ENCODE measurements at regions of chr19 and their contacts with region 1.

Region 1: GRCh38 chr19:33612928-33613619 is 8.7 kb upstream of the CHST8 start:
- DNase-seq: no peak
- ATAC-seq: no peak
- H3K4me3 ChIP-seq: no peak overlapping the region
- H3K27ac ChIP-seq: no peak overlapping the region
- H3K4me1 ChIP-seq: no peaks in the 10 kb centered on the region
- H3K27me3 ChIP-seq: peaks cover 34% of the 10 kb centered on the region
- CTCF ChIP-seq: no peak

Region 2: GRCh38 chr19:33514885-33515551 is 98.1 kb before region 1 on chr19:
- CTCF ChIA-PET with region 1: no interaction called
- POLR2A ChIA-PET with region 1: interaction called, 11 read pairs
- in situ Hi-C with region 1: no loop called
- intact Hi-C with region 1: no loop called
- DNase-seq: no peak
- ATAC-seq: 0 out of 2 replicates have a peak, but pooled peaks have one; percentile 26
- H3K4me3 ChIP-seq: no peak overlapping the region
- H3K27ac ChIP-seq: no peak overlapping the region
- H3K4me1 ChIP-seq: peaks cover 3% of the 10 kb centered on the region; the same call in 1 of the 2 replicates
- H3K27me3 ChIP-seq: no peaks in the 10 kb centered on the region
- CTCF ChIP-seq: no peak